ENCODE measurements at regions of chr3 and their contacts with region 1.

Region 1: DNA sequence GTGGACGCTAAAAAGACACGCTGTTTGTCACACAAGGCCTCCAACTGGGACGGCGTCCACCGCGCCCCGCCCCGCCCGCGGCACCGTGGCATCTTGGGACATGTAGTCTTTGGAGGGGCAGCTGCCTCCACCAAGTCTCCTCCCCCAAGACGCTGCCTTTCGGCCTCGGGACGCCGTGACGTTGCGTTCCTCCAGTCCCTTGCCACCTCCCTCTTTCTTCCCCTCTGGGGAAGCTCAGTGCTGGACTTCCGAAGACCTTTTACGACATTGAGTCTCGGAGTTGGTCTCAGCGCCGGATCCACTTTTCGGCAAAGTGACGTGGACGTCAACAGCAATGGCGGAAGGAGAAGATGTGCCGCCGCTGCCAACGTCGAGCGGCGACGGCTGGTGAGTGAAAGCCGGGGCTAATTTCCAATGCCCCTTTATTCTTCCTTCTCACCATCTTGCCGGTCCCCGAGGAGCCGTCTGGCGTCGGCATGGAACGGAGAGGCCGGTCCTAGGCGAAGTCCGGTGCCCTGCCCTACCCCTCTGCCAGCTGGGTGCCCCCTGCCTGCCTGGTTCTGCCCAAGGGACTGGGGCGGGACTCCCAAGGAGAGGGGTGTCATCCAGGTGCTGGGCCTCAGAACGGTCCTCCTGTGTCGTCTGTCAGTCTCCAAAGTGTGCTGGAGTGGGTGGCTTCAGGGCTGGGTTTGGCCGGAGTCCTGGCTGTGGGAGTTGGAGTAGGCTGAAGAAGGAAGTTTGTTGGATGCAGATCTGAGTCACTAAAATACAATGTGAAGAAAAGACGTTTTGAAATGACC is at the start of gene TBC1D23:
- DNase-seq: peak; percentile 98
- H3K4me3 Mint-ChIP-seq: peak within 1 kb of the TSS; percentile 95
- H3K27ac Mint-ChIP-seq: peak within 1 kb of the TSS; percentile 97
- H3K4me1 Mint-ChIP-seq: peaks cover 40% of the 10 kb centered on the region
- H3K27me3 Mint-ChIP-seq: no peaks in the 10 kb centered on the region
- total RNA-seq, gene TBC1D23: 18.6 and 18.7 TPM in 2 replicates

Region 2: GRCh38 chr3:99817437-99818240 is 443.2 kb before region 1 on chr3 and contains the start of gene CMSS1:
- intact Hi-C with region 1: loop called (anchors 1 kb)
- DNase-seq: peak; percentile 92
- H3K4me3 Mint-ChIP-seq: peak within 1 kb of the TSS; percentile 95
- H3K27ac Mint-ChIP-seq: peak within 1 kb of the TSS; percentile 96
- H3K4me1 Mint-ChIP-seq: peaks cover 42% of the 10 kb centered on the region
- H3K27me3 Mint-ChIP-seq: no peaks in the 10 kb centered on the region
- total RNA-seq, gene CMSS1: 138 and 143 TPM in 2 replicates

Region 3: GRCh38 chr3:100210772-100211135 is 50.1 kb before region 1 on chr3:
- intact Hi-C with region 1: loop called (anchors 1 kb)
- DNase-seq: no peak
- H3K4me3 Mint-ChIP-seq: no peak overlapping the region
- H3K27ac Mint-ChIP-seq: peak overlapping the region; percentile 64
- H3K4me1 Mint-ChIP-seq: peaks cover 21% of the 10 kb centered on the region
- H3K27me3 Mint-ChIP-seq: peaks cover 8% of the 10 kb centered on the region

Region 4: DNA sequence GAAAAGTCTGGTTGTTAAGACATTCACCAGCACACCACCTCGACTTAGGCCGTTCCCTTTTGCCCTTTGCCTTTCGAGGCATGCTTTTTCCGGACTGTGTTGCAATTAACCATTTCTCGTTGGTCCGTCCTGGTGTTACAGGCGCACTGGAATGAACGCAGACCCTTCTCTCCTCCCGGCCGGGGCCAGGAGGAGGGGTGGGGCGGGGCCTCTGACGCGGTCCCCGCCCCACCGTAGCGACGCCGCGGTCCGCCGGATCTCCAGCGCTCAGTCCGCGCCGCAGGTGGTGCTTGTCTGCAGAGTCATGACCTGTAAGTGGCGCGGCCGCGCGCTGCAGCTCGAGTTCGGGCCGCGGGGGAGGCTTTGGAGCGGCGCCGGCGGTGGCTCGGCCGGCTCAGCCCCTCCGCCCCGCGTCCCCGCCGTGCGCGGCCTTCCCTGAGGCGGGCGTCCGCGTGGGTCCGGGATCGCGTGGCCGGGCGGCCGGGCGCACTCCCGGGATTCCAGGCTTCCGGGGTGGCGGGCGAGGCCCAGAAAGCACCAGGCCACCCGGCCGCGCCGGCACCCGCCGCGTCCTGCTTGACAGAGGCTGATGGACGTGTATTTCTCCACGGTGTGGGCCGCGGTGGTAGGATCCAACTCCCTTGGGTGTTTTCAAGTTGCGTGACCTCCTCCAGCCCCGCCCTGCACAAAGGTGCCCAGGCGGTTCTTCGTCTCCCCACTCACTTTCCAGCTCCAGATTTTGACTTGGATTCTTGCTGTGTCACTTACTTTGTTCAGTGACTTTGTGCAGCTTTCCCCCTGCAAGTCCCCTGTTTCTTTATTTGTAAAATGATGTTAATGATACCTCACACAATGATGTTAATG is 73.8 kb after region 1 on chr3 and contains the start of gene NIT2:
- intact Hi-C with region 1: loop called (anchors 5 kb)
- DNase-seq: peak; percentile 74
- H3K4me3 Mint-ChIP-seq: peak within 1 kb of the TSS; percentile 99
- H3K27ac Mint-ChIP-seq: peak within 1 kb of the TSS; percentile 99
- H3K4me1 Mint-ChIP-seq: peaks cover 18% of the 10 kb centered on the region
- H3K27me3 Mint-ChIP-seq: no peaks in the 10 kb centered on the region
- total RNA-seq, gene NIT2: 73.0 and 73.7 TPM in 2 replicates

Region 5: DNA sequence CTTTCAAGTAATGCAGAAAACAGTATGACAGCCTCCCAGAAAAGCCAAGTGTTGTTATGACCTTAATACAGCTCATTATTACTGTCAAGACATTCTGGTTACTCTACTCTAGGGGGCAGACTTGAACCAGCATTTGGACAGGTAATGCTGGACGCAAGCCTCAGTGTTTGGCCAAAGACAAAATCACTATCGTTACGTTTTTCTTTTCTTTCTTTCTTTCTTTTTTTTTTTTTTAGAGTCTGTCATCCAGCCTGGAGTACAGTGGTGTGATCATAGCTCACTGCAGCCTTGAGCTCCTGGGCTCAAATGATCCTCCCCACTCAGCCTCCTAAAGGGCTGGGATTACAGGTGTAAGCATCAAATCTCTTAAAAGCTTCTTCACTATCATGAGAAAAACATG is 202.1 kb after region 1 on chr3:
- intact Hi-C with region 1: no loop called
- DNase-seq: no peak
- H3K4me3 Mint-ChIP-seq: no peak overlapping the region
- H3K27ac Mint-ChIP-seq: no peak overlapping the region
- H3K4me1 Mint-ChIP-seq: peaks cover 7% of the 10 kb centered on the region
- H3K27me3 Mint-ChIP-seq: peaks cover 2% of the 10 kb centered on the region

Region 6: GRCh38 chr3:100492059-100493006 is 231.4 kb after region 1 on chr3 and contains the start of gene TMEM45A:
- intact Hi-C with region 1: loop called (anchors 1 kb)
- DNase-seq: peak; percentile 74
- H3K4me3 Mint-ChIP-seq: peak within 1 kb of the TSS; percentile 87
- H3K27ac Mint-ChIP-seq: peak within 1 kb of the TSS; percentile 58
- H3K4me1 Mint-ChIP-seq: peaks cover 8% of the 10 kb centered on the region
- H3K27me3 Mint-ChIP-seq: peaks cover 32% of the 10 kb centered on the region
- total RNA-seq, gene TMEM45A: 0.96 and 1.1 TPM in 2 replicates

Region 7: GRCh38 chr3:101685870-101686412 is 1425.1 kb after region 1 on chr3:
- intact Hi-C with region 1: loop called (anchors 10 kb)
- DNase-seq: peak; percentile 31
- H3K4me3 Mint-ChIP-seq: peak overlapping the region; percentile 99
- H3K27ac Mint-ChIP-seq: peak overlapping the region; percentile 98
- H3K4me1 Mint-ChIP-seq: peaks cover 30% of the 10 kb centered on the region
- H3K27me3 Mint-ChIP-seq: no peaks in the 10 kb centered on the region

Measured in activated T-helper 2 cell treated with anti-CD3 and anti-CD28 coated beads, Interferon-gamma antibody, Interleukin-2, Interleukin-4, amounts not matched to agents 10 μg/mL and 5 μg/mL and 100 μg/mL, durations not matched to agents 14 hours and 24 hours and 36 hours (primary cell).